ENCODE measurements at regions of chr12 and their contacts with region 1.

Region 1: DNA sequence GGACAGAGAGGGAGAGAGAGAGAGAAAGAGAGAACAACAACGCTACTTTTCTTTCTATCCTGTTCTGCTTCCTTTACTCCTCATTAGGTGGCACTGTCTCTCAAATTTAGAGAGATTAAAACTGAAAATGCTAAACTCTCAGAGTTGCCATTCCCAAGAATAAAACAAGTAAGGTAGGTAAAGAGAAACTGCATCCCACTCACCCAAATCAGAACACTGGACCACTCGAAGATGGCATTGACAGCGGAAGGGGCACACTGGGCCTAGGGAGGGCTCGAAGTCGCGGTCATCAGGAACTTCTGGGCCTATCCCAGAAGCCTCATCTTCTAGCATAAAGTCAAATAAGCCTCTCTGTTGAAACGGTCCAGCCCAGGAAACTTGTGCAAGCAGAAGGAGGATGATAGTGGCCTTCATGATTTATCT is 4.5 kb downstream of the DCN start:
- DNase-seq: no peak
- H3K4me3 ChIP-seq: peak overlapping the region; percentile 21 to 40 (median 37)
- H3K27ac ChIP-seq: peak overlapping the region; percentile 60 to 75 (median 70)
- H3K4me1 ChIP-seq: peaks cover 0 to 23% (median 3%) of the 10 kb centered on the region in 4 donors
- H3K27me3 ChIP-seq: no peaks in the 10 kb centered on the region
- CTCF ChIP-seq: peak; percentile 33 to 52 (median 45)
- EP300 ChIP-seq: no peak
- POLR2A ChIP-seq: no peak

Region 2: GRCh38 chr12:91222746-91223145 is 44.6 kb after region 1 on chr12:
- intact Hi-C with region 1: no loop called
- DNase-seq: no peak
- H3K4me3 ChIP-seq: no peak overlapping the region
- H3K27ac ChIP-seq: peak overlapping the region in 1 of 4 donors; percentile 14
- H3K4me1 ChIP-seq: no peaks in the 10 kb centered on the region
- H3K27me3 ChIP-seq: no peaks in the 10 kb centered on the region
- CTCF ChIP-seq: no peak
- EP300 ChIP-seq: no peak
- POLR2A ChIP-seq: no peak

Region 3: DNA sequence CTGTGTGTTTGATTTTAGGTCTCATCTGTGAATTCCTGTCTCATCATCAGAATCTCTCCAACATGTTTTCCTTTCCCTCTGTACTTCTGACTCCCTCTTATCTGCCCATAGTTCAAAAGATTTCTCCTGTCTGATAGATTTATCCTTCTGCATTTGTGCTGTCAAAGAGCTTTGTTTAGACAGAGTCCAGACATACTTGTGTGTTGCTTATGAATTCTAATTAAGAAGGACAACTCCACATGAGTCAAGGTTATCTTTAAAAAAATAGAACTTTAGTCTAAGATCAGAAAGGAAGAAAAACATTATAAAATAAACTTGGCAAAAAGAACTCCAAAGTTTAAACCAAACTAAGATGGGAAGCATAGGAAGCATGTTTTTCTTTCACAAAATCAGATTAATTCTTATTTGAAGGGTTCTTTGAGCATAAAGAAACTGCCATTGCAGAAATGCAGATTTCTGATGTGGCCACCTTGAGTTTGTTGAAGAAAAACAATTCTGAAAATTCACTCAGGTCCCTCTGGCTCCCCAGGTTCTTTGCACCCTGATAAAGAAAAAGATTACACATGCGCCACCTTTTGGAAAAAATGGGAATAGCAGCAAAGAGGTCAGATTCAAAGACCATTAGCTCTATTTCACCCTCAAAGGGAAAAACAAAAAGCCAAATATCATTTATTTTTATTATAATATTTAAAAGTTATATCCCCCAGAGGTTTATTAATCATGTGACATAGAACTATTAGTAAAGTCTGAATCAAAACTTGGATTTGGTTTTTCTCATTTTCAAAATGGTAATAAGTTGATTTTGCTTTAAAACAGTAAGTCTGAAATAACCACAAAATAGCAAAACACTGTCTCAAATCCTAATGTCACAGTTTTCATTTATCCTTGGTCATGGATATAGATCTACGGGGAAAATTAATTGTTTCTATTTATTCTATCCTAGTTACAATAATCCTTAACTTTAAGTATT is 148.2 kb after region 1 on chr12:
- intact Hi-C with region 1: loop called (anchors 2 kb)
- DNase-seq: peak; percentile 66
- H3K4me3 ChIP-seq: peak overlapping the region in 1 of 4 donors; percentile 1
- H3K27ac ChIP-seq: peak overlapping the region; percentile 30 to 57 (median 37)
- H3K4me1 ChIP-seq: peaks cover 0 to 14% (median 10%) of the 10 kb centered on the region in 4 donors
- H3K27me3 ChIP-seq: no peaks in the 10 kb centered on the region
- CTCF ChIP-seq: peak; percentile 59 to 65 (median 63)
- EP300 ChIP-seq: no peak
- POLR2A ChIP-seq: no peak

Region 4: DNA sequence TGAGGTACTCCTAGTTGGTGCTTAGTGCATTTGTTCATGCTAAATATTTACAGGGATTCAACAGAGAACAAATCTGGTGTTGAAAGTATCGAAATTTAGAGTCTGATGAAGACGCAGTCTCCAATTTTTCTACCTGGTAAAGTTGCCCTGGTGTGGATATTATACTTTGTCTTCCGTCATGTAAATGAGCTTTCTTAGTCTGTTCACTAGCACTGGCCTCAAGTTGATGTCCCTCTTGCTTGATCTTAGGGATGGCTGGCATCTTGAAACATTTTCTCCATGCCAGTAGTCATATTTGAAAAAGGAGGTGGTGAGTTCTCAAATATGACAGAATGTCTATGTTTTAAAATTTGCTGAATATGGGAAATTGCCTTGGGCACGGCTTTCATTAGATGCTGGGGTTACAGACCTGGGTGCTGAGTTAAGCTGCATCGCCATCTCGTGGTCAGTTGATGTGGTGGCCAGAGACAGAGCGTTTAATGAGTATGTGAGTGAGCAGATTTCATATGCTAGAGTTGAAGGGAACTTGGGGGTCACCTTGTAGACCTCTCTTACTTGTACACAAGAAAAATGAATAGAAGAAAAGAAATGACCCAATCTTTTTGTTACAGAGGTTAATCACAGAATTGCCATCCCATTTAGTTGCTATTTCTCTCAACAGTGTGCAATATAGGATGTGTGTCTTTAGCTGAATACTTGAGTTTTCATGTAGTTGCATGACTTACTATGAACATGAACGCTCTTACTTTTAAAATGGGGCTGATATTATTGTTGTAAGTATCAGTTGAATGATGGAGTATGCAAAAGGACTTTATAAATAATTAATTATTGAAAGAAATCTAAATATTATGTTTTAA is 177.2 kb after region 1 on chr12:
- intact Hi-C with region 1: loop called (anchors 2 kb)
- DNase-seq: peak; percentile 84
- H3K4me3 ChIP-seq: no peak overlapping the region
- H3K27ac ChIP-seq: peak overlapping the region in 1 of 4 donors; percentile 17
- H3K4me1 ChIP-seq: peaks cover 0 to 11% (median 7%) of the 10 kb centered on the region in 4 donors
- H3K27me3 ChIP-seq: no peaks in the 10 kb centered on the region
- CTCF ChIP-seq: peak; percentile 55 to 86 (median 80)
- EP300 ChIP-seq: no peak
- POLR2A ChIP-seq: no peak

Region 5: DNA sequence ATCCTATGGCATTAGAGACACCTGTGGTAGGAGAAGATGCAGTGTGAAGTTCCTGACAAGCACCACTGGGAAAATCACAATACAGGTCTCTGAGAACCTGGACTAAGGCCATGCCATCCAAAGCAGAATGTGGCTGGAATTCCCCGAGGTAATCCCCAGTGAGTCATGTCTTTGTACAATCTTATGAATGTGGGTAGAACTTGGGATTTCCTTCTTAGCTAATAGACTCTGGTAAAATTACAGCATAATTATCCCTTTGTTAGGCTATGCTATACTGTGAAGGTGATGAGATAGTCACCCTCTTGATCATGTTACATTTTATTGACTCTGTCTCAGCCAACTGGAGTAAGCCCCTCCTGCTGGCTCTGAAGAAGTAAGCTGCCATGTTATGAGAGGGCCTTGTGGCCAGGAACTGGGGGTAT is 228.8 kb after region 1 on chr12:
- intact Hi-C with region 1: no loop called
- DNase-seq: no peak
- H3K4me3 ChIP-seq: no peak overlapping the region
- H3K27ac ChIP-seq: no peak overlapping the region
- H3K4me1 ChIP-seq: no peaks in the 10 kb centered on the region
- H3K27me3 ChIP-seq: no peaks in the 10 kb centered on the region
- CTCF ChIP-seq: no peak
- EP300 ChIP-seq: no peak
- POLR2A ChIP-seq: no peak